Activated naive CD4-positive, alpha-beta T cell treated with anti-CD3 and anti-CD28 coated beads for 36 hours (primary cell): ENCODE measurements at regions of chr1 and their contacts with region 1.

Region 1: DNA sequence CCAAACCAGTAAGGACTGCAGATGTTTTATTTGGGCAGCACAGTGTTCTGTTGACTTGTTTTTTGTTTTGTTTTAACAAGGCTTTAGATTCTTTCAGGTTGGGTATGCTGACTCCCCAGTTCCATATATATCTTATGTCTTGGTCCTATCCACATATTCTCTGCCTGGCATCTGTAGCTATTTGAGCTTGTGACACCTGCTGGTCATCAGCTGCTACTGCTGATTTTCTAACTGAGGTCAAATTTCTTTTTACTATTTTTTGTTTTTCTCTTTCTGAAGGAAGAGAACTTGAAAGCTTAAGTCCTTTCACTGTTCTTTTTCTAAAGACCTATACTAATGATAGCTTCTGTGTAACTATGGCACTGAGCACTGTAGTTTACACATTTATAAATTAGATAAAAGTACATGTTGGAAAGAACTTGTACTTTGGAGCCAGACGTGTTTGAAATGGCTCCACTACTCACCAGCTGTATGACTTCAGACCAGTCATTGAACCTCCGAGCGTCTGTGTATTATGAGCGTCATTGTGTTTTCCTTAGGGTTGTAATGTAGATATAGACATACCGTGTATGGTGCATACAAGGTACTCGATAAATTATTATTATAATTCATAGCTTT is 109.4 kb downstream of the NRDC start:
- DNase-seq: peak; percentile 37
- H3K4me3 Mint-ChIP-seq: no peak overlapping the region
- H3K27ac Mint-ChIP-seq: no peak overlapping the region
- H3K4me1 Mint-ChIP-seq: peaks cover 10% of the 10 kb centered on the region
- H3K27me3 Mint-ChIP-seq: no peaks in the 10 kb centered on the region

Region 2: GRCh38 chr1:51316072-51316845 is 452.8 kb before region 1 on chr1:
- CTCF ChIA-PET with region 1: interaction called, 4 read pairs
- intact Hi-C with region 1: loop called (anchors 1 kb)
- DNase-seq: peak; percentile 45
- H3K4me3 Mint-ChIP-seq: no peak overlapping the region
- H3K27ac Mint-ChIP-seq: no peak overlapping the region
- H3K4me1 Mint-ChIP-seq: peaks cover 11% of the 10 kb centered on the region
- H3K27me3 Mint-ChIP-seq: no peaks in the 10 kb centered on the region

Region 3: DNA sequence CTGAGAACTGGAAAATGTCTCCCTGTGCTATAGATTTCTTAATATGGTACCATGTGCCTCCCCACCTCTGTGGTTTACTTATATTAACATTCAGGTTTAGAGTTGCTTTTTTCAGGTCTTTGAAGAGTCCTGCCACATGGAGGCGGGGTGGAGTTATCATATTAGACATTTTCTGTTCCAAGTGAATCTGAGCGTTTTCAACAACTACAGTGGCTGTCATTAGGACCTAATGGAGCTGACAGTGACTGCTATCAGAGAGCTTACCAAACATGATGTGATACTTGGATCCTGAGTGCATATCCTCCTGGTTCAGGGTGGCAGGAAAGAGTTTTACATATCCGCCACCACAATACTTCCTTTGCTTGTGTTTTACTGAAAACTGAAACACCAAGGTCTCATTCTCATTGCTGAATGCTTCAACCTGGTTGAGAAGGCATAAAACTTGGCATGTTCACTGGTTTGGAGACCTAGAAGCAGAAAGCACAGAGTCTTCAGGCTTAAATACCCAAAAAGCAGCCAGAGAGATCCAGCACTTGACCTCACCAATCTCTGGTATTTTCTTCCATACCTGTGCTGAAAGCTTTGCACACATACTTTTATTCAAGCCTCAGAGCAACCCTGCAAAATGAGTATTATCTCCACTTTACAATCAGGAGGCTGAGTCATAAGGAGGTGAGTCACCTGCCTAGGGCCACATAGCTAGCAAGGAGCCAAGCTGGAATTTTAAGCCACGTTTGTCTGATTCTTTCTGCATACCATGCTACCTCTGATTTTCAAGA is 199.6 kb before region 1 on chr1:
- CTCF ChIA-PET with region 1: interaction called, 3 read pairs
- intact Hi-C with region 1: loop called (anchors 2 kb)
- DNase-seq: peak; percentile 68
- H3K4me3 Mint-ChIP-seq: peak overlapping the region; percentile 13
- H3K27ac Mint-ChIP-seq: peak overlapping the region; percentile 91
- H3K4me1 Mint-ChIP-seq: peaks cover 31% of the 10 kb centered on the region
- H3K27me3 Mint-ChIP-seq: no peaks in the 10 kb centered on the region

Region 4: DNA sequence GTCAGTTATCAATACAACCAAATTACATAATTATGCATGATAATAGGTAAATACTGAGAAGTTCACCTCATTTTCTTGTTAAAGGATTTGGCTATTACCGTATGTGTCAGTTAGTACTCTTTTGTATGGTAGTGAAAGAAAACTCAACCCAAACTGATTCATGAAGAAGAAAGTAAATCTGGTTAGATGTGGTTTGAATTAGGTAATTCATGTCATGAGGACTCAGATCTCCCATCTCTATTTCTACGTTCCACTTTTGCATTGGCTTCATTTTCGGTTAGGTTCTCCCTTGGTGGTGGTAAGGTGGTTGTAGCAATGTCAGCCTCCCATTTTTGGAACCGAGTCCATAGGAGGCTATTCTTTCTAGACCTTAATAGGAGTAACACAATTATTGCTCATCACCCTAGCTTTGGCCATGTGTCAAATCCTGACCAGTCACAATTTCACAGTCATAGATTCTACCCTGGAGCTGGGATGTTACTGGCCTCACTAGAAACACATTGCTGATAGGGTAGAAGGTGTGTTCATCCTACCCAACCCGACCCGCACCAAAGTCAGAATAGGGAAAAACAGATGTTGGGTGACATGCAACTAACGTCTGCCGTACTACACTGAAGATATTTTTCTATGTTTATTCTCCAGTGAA is 54.6 kb before region 1 on chr1:
- CTCF ChIA-PET with region 1: no interaction called
- intact Hi-C with region 1: no loop called
- DNase-seq: no peak
- H3K4me3 Mint-ChIP-seq: no peak overlapping the region
- H3K27ac Mint-ChIP-seq: no peak overlapping the region
- H3K4me1 Mint-ChIP-seq: peaks cover 7% of the 10 kb centered on the region
- H3K27me3 Mint-ChIP-seq: no peaks in the 10 kb centered on the region

Region 5: GRCh38 chr1:51729156-51729823 is 39.8 kb before region 1 on chr1:
- CTCF ChIA-PET with region 1: interaction called, 14 read pairs
- intact Hi-C with region 1: loop called (anchors 5 kb)
- DNase-seq: peak; percentile 97
- H3K4me3 Mint-ChIP-seq: peak overlapping the region; percentile 87
- H3K27ac Mint-ChIP-seq: peak overlapping the region; percentile 87
- H3K4me1 Mint-ChIP-seq: peaks cover 33% of the 10 kb centered on the region
- H3K27me3 Mint-ChIP-seq: no peaks in the 10 kb centered on the region

Region 6: DNA sequence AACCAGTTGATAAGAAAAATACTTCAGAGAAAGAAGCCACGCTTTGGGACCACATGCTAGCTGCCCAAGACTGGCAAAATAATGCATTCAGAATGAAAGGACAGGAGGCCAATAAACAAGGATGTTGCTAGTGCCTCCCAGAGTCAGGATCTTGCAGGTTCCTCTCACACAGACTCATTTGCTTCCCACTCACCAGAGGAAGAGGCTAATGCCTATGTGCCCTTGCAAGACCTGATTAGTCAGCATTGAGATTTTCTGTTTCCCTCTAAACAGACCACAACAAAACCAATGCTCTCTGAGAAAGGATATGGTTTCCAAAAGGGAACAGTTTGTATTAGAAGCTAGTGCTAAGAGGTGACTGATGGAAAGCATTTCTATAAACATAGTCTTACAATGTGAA is 23.8 kb after region 1 on chr1:
- CTCF ChIA-PET with region 1: interaction called, 10 read pairs
- intact Hi-C with region 1: no loop called
- DNase-seq: peak; percentile 32
- H3K4me3 Mint-ChIP-seq: no peak overlapping the region
- H3K27ac Mint-ChIP-seq: peak overlapping the region; percentile 39
- H3K4me1 Mint-ChIP-seq: peaks cover 11% of the 10 kb centered on the region
- H3K27me3 Mint-ChIP-seq: no peaks in the 10 kb centered on the region